ENCODE measurements at regions of chr6 and their contacts with region 1.

Region 1: DNA sequence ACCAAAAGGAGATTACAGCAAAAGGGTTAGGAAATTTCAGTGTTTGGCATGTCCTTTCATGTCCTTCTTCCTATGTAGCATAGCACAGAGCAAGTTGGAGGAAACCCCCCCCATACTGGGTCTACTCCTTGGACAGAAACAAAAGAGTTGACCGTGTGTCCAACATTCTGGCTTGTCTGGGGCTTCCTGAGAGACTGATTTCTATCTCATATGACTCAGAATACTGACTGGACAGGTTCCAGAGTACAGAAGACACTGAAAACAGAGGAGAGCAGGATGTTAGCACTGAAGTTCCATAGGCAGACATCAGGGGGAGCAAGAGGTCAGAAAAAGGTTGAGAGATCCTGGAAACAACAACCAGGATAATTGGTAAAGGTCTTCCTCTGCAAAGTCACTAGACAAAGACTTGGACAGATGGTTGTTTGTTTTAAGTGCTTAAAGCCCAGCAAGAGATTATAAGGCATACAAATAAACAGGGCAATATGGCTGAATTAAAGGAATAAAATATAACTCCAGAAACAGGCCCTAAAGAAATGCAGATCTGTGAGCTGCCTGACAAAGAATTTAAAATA is 48.4 kb downstream of the USP49 start:
- DNase-seq: peak; percentile 65
- ATAC-seq: peak; percentile 81
- H3K4me3 Mint-ChIP-seq: no peak overlapping the region
- H3K27ac Mint-ChIP-seq: no peak overlapping the region
- H3K4me1 Mint-ChIP-seq: peaks cover 9% of the 10 kb centered on the region
- H3K27me3 Mint-ChIP-seq: no peaks in the 10 kb centered on the region

Region 2: DNA sequence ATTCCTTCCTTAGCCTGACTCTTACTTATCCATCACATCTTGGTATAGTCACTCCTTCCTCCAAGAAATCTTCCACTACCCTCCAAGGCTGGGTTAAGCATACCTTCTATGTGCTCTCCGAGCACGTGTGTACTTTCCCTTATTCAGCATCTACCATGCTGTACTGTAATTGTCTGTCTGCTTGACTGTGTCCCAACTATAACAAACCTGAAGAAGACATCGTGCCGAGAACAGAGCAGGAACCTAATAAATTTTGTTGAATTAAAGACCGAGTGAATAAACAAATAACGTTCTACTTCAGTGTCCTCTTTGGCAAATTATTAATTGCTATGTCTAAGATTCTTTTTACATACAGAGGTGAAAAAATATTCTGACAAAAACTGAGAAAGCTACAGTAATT is 12.6 kb after region 1 on chr6:
- CTCF ChIA-PET with region 1: interaction called, 12 read pairs
- POLR2A ChIA-PET with region 1: no interaction called
- DNase-seq: no peak
- ATAC-seq: no peak
- H3K4me3 Mint-ChIP-seq: no peak overlapping the region
- H3K27ac Mint-ChIP-seq: no peak overlapping the region
- H3K4me1 Mint-ChIP-seq: no peaks in the 10 kb centered on the region
- H3K27me3 Mint-ChIP-seq: no peaks in the 10 kb centered on the region

Region 3: DNA sequence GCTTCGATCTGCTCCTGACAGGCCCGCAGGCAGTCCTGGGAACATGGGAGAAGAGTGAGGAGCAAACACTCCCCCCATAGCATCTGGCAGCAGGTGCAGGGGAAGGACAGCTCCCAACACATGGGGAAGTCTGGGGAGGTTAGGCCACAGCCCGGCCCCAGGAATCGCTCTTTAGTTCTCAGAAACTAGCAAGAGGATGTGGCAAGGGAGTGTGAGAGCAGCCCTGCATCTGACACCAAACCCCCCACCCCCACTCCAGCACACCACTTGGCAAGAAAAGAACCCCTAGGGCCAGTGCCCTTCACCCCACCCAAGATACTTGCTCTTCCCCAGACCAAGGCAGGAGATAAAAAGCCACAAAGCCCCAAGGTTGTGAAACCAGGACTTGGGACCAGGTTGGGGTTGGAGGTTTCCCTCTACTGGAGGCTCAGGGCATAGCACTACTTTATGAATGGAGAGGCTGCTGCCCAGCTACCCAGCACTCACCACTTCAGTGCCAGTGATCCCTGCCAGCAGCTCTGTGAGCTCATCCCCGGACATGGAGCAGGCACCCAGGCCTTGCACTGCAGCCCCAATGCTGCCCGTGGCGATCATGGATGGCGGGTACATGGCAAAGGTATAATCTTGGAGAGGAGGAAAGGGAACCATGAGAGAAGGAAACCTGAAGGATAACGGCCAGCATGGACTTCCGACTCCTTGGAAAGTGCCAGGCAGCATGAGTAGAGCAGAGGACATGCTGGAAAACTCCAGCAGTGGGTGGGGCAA is 89.5 kb after region 1 on chr6:
- CTCF ChIA-PET with region 1: interaction called, 18 read pairs
- POLR2A ChIA-PET with region 1: interaction called, 3 read pairs
- DNase-seq: peak; percentile 98
- ATAC-seq: peak; percentile 75
- H3K4me3 Mint-ChIP-seq: peak overlapping the region; percentile 99
- H3K27ac Mint-ChIP-seq: peak overlapping the region; percentile 92
- H3K4me1 Mint-ChIP-seq: peaks cover 64% of the 10 kb centered on the region
- H3K27me3 Mint-ChIP-seq: no peaks in the 10 kb centered on the region

Region 4: DNA sequence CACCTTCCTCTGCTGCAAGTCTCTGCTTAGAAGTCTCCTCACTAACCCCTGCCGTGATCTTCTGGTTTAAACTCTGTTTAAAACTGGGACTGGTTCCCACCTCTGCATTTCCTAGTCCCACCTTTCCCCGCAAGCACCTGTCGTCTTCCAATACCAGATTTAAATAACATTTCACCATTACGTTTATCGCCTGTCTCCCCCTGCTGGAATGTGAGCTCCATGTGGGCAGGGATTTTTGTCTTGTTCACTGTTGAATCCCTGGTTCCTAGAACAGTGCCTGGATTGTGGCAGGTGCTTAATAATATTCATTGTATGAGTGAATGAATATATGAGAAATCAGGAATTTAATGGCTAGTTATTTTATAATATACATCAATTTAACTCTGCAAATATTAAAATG is 329.1 kb after region 1 on chr6:
- CTCF ChIA-PET with region 1: no interaction called
- POLR2A ChIA-PET with region 1: no interaction called
- DNase-seq: no peak
- ATAC-seq: no peak
- H3K4me3 Mint-ChIP-seq: no peak overlapping the region
- H3K27ac Mint-ChIP-seq: no peak overlapping the region
- H3K4me1 Mint-ChIP-seq: peaks cover 2% of the 10 kb centered on the region
- H3K27me3 Mint-ChIP-seq: peaks cover 2% of the 10 kb centered on the region